ENCODE measurements at regions of chr13 and their contacts with region 1.

Region 1: DNA sequence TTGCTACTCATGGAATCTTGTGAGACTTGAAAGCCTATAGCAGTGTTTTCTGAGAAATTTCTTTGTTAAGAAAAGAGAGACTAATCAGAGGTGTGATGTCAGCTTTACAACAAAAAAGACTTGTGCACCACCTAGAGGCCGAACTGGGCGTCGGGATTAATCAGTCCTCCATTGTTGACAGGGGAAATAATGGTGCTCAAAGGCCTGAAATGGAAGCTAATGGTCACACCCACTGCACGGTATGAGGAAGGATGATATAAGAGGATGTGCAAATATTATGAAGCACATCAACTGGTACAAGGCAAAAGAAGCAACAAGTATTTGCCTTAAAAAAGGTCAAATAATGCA is 480.2 kb upstream of the MIR17HG start:
- DNase-seq: peak; percentile 84 to 85
- H3K4me3 ChIP-seq: no peak overlapping the region
- H3K4me3 Mint-ChIP-seq: no peak overlapping the region
- H3K27ac Mint-ChIP-seq: peak overlapping the region; percentile 72
- H3K4me1 ChIP-seq: peaks cover 10% of the 10 kb centered on the region
- H3K4me1 Mint-ChIP-seq: peaks cover 13% of the 10 kb centered on the region
- H3K27me3 ChIP-seq: no peaks in the 10 kb centered on the region
- H3K27me3 Mint-ChIP-seq: no peaks in the 10 kb centered on the region
- CTCF ChIP-seq: peak; percentile 68 to 74

Region 2: GRCh38 chr13:89695343-89696257 is 1171.7 kb before region 1 on chr13:
- CTCF ChIA-PET with region 1: no interaction called
- POLR2A ChIA-PET with region 1: no interaction called
- intact Hi-C with region 1: loop called (anchors 5 kb)
- DNase-seq: peak; percentile 45 to 71
- H3K4me3 ChIP-seq: no peak overlapping the region
- H3K4me3 Mint-ChIP-seq: no peak overlapping the region
- H3K27ac Mint-ChIP-seq: no peak overlapping the region
- H3K4me1 ChIP-seq: no peaks in the 10 kb centered on the region
- H3K4me1 Mint-ChIP-seq: no peaks in the 10 kb centered on the region
- H3K27me3 ChIP-seq: no peaks in the 10 kb centered on the region
- H3K27me3 Mint-ChIP-seq: no peaks in the 10 kb centered on the region
- CTCF ChIP-seq: peak; percentile 81 to 84

Region 3: DNA sequence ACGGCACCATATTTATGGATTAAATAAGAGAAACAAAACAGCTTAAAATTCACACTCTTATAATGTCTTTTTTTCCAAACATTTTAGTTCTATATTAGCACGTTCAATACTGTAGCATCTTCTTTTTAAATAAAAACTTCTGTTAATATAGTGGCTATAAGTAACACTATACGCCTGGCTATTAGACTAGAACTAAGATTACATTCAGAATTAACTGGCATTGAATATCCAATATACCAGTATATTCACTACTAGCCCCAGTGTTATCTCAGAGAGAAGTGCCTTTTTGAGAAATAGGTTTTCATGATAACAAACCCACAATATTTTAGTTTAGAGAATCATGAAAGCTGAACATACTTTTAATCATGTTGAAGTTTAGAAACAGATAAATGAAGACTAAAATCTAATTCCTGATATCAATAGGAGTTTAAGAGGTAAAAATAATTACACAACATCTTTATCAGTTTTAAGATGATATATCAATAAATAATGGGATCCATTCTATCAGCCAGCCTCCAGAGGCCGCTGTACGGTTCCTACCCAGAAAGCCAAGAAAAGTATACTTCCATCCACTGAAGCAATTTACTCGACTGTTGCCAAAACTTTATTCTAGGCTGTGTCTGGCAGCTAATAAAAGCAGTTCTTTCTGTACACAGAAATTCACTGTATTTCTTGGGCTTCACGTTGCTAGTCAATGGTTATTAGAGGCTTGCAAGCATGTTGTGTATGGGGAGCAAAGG is 633.2 kb before region 1 on chr13:
- CTCF ChIA-PET with region 1: no interaction called
- POLR2A ChIA-PET with region 1: no interaction called
- intact Hi-C with region 1: loop called (anchors 1 kb)
- DNase-seq: no peak
- H3K4me3 ChIP-seq: no peak overlapping the region
- H3K4me3 Mint-ChIP-seq: no peak overlapping the region
- H3K27ac Mint-ChIP-seq: no peak overlapping the region
- H3K4me1 ChIP-seq: no peaks in the 10 kb centered on the region
- H3K4me1 Mint-ChIP-seq: no peaks in the 10 kb centered on the region
- H3K27me3 ChIP-seq: no peaks in the 10 kb centered on the region
- H3K27me3 Mint-ChIP-seq: no peaks in the 10 kb centered on the region
- CTCF ChIP-seq: peak; percentile 16 to 28

Region 4: GRCh38 chr13:90455823-90456222 is 411.5 kb before region 1 on chr13:
- CTCF ChIA-PET with region 1: interaction called, 16 read pairs
- POLR2A ChIA-PET with region 1: no interaction called
- intact Hi-C with region 1: loop called (anchors 1 kb)
- DNase-seq: peak in 1 of 2 experiments; percentile 15
- H3K4me3 ChIP-seq: no peak overlapping the region
- H3K4me3 Mint-ChIP-seq: no peak overlapping the region
- H3K27ac Mint-ChIP-seq: no peak overlapping the region
- H3K4me1 ChIP-seq: no peaks in the 10 kb centered on the region
- H3K4me1 Mint-ChIP-seq: no peaks in the 10 kb centered on the region
- H3K27me3 ChIP-seq: no peaks in the 10 kb centered on the region
- H3K27me3 Mint-ChIP-seq: no peaks in the 10 kb centered on the region
- CTCF ChIP-seq: peak; percentile 35 to 44

Region 5: DNA sequence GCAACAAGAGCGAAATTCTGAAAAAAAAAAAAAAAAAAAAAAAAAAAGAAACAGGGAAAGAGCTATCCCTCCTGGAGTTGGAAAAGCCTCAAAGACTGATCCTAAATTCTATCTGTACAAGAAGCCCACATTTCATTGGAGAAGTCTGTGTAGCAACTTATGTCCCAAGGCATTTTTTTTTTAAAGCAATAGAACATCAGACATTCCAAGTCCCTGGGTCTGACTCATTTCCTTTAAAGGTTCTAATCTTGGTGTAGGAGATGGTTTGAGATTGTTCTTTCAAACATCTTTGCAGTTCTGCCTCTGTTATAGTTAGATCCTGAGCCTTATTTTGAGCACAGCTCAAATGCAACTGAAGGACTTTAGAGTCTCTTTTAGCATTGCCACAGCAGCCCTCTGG is 226.3 kb before region 1 on chr13:
- CTCF ChIA-PET with region 1: no interaction called
- POLR2A ChIA-PET with region 1: no interaction called
- intact Hi-C with region 1: loop called (anchors 5 kb)
- DNase-seq: no peak
- H3K4me3 ChIP-seq: no peak overlapping the region
- H3K4me3 Mint-ChIP-seq: no peak overlapping the region
- H3K27ac Mint-ChIP-seq: no peak overlapping the region
- H3K4me1 ChIP-seq: no peaks in the 10 kb centered on the region
- H3K4me1 Mint-ChIP-seq: no peaks in the 10 kb centered on the region
- H3K27me3 ChIP-seq: no peaks in the 10 kb centered on the region
- H3K27me3 Mint-ChIP-seq: no peaks in the 10 kb centered on the region
- CTCF ChIP-seq: no peak

Region 6: GRCh38 chr13:90800082-90800746 is 67.1 kb before region 1 on chr13:
- CTCF ChIA-PET with region 1: no interaction called
- POLR2A ChIA-PET with region 1: no interaction called
- intact Hi-C with region 1: loop called (anchors 2 kb)
- DNase-seq: no peak
- H3K4me3 ChIP-seq: no peak overlapping the region
- H3K4me3 Mint-ChIP-seq: no peak overlapping the region
- H3K27ac Mint-ChIP-seq: no peak overlapping the region
- H3K4me1 ChIP-seq: no peaks in the 10 kb centered on the region
- H3K4me1 Mint-ChIP-seq: no peaks in the 10 kb centered on the region
- H3K27me3 ChIP-seq: no peaks in the 10 kb centered on the region
- H3K27me3 Mint-ChIP-seq: no peaks in the 10 kb centered on the region
- CTCF ChIP-seq: no peak

Region 7: GRCh38 chr13:90824027-90824426 is 43.3 kb before region 1 on chr13:
- CTCF ChIA-PET with region 1: no interaction called
- POLR2A ChIA-PET with region 1: no interaction called
- intact Hi-C with region 1: no loop called
- DNase-seq: no peak
- H3K4me3 ChIP-seq: no peak overlapping the region
- H3K4me3 Mint-ChIP-seq: no peak overlapping the region
- H3K27ac Mint-ChIP-seq: no peak overlapping the region
- H3K4me1 ChIP-seq: no peaks in the 10 kb centered on the region
- H3K4me1 Mint-ChIP-seq: no peaks in the 10 kb centered on the region
- H3K27me3 ChIP-seq: no peaks in the 10 kb centered on the region
- H3K27me3 Mint-ChIP-seq: no peaks in the 10 kb centered on the region
- CTCF ChIP-seq: no peak

Region 8: GRCh38 chr13:90855513-90855912 is 11.8 kb before region 1 on chr13:
- CTCF ChIA-PET with region 1: no interaction called
- POLR2A ChIA-PET with region 1: no interaction called
- intact Hi-C with region 1: no loop called
- DNase-seq: no peak
- H3K4me3 ChIP-seq: no peak overlapping the region
- H3K4me3 Mint-ChIP-seq: no peak overlapping the region
- H3K27ac Mint-ChIP-seq: no peak overlapping the region
- H3K4me1 ChIP-seq: no peaks in the 10 kb centered on the region
- H3K4me1 Mint-ChIP-seq: no peaks in the 10 kb centered on the region
- H3K27me3 ChIP-seq: no peaks in the 10 kb centered on the region
- H3K27me3 Mint-ChIP-seq: no peaks in the 10 kb centered on the region
- CTCF ChIP-seq: no peak

Region 9: DNA sequence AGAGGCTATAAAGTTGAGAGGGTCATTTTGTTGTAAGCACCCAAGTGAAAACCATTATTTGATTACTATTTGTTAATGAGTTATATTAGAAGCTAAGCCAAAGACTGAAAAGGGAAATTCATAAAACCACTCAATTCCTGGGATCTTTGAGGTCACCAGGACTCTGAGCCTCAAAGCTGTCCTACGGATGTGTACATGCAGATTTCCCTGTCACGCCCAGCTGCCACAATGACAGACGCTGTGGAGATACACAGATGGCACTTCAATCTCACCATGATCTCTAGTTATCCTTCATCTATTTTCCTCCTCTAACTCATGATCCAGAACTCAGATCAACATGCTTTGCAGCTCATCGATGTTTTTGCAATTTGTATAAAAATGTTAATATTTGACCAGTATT is 76.6 kb after region 1 on chr13:
- CTCF ChIA-PET with region 1: no interaction called
- POLR2A ChIA-PET with region 1: no interaction called
- intact Hi-C with region 1: no loop called
- DNase-seq: no peak
- H3K4me3 ChIP-seq: no peak overlapping the region
- H3K4me3 Mint-ChIP-seq: no peak overlapping the region
- H3K27ac Mint-ChIP-seq: no peak overlapping the region
- H3K4me1 ChIP-seq: no peaks in the 10 kb centered on the region
- H3K4me1 Mint-ChIP-seq: no peaks in the 10 kb centered on the region
- H3K27me3 ChIP-seq: no peaks in the 10 kb centered on the region
- H3K27me3 Mint-ChIP-seq: peaks cover 9% of the 10 kb centered on the region
- CTCF ChIP-seq: no peak

Region 10: DNA sequence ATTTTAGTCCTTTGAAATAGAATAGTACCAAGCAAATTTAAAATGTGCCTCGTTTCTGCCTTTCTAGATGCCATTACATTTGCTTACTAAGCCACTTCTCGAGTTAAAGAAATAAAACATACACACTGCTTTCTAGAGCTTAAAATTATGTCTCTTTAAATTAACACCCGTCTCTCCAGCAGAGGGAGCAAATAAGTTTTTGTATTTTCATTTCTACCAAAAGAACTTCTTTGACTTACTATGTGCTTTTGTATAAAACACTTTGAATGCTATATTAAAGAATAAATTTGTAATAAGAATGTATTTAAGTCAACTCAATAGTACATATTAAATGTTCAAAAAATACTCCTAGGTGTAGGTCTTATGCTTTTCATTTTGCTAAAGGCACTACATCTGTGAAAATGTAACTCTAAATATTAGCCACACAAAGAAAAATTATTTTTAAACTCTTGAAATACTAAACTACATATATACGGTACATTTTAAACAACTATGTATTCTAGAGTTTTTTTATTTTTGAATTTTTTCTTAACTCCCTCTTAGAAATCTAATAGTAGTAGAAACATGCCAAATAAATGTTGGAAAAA is 210.9 kb after region 1 on chr13:
- CTCF ChIA-PET with region 1: no interaction called
- POLR2A ChIA-PET with region 1: no interaction called
- intact Hi-C with region 1: no loop called
- DNase-seq: peak in 1 of 2 experiments; percentile 15
- H3K4me3 ChIP-seq: no peak overlapping the region
- H3K4me3 Mint-ChIP-seq: no peak overlapping the region
- H3K27ac Mint-ChIP-seq: no peak overlapping the region
- H3K4me1 ChIP-seq: peaks cover 17% of the 10 kb centered on the region
- H3K4me1 Mint-ChIP-seq: peaks cover 23% of the 10 kb centered on the region
- H3K27me3 ChIP-seq: no peaks in the 10 kb centered on the region
- H3K27me3 Mint-ChIP-seq: no peaks in the 10 kb centered on the region
- CTCF ChIP-seq: peak; percentile 51 to 56

Region 11: DNA sequence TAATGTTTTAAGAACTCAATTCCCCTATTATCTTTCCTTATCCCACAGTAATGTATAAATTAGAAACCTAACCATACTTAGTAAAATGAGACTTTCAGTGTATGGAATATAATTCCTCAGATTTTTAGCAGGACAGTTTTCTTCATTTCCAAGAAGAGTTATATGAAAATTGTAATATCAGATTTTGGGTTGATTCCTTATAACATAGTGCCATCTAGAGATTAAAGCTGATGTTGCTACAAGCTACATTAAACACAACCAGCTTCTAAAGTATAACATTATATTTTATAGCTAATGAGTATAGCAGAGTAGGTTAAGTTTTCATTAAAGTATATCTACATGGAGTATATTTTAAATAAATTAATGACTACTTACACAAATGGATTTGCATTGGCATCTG is 380.5 kb after region 1 on chr13:
- CTCF ChIA-PET with region 1: no interaction called
- POLR2A ChIA-PET with region 1: no interaction called
- intact Hi-C with region 1: loop called (anchors 10 kb)
- DNase-seq: no peak
- H3K4me3 ChIP-seq: no peak overlapping the region
- H3K4me3 Mint-ChIP-seq: no peak overlapping the region
- H3K27ac Mint-ChIP-seq: no peak overlapping the region
- H3K4me1 ChIP-seq: peaks cover 12% of the 10 kb centered on the region
- H3K4me1 Mint-ChIP-seq: no peaks in the 10 kb centered on the region
- H3K27me3 ChIP-seq: no peaks in the 10 kb centered on the region; the same call in 1 of the 2 replicates
- H3K27me3 Mint-ChIP-seq: peaks cover 11% of the 10 kb centered on the region
- CTCF ChIP-seq: peak; percentile 24 to 40

Measured in Caco-2 (cell line).